ENCODE measurements at regions of chr14 and their contacts with region 1.

Region 1: GRCh38 chr14:49633640-49634546 is 1.2 kb downstream of the DNAAF2 start:
- DNase-seq: peak; percentile 97
- ATAC-seq: peak; percentile 80
- H3K4me3 ChIP-seq: peak overlapping the region; percentile 80 to 98 (median 91)
- H3K4me3 Mint-ChIP-seq: peak overlapping the region; percentile 96
- H3K27ac ChIP-seq: peak overlapping the region; percentile 97 to 98
- H3K27ac Mint-ChIP-seq: peak overlapping the region; percentile 97
- H3K4me1 ChIP-seq: peaks cover 20 to 26% of the 10 kb centered on the region in 2 donors
- H3K4me1 Mint-ChIP-seq: peaks cover 47% of the 10 kb centered on the region
- H3K27me3 ChIP-seq: no peaks in the 10 kb centered on the region
- H3K27me3 Mint-ChIP-seq: no peaks in the 10 kb centered on the region
- CTCF ChIP-seq: peak; percentile 85

Region 2: DNA sequence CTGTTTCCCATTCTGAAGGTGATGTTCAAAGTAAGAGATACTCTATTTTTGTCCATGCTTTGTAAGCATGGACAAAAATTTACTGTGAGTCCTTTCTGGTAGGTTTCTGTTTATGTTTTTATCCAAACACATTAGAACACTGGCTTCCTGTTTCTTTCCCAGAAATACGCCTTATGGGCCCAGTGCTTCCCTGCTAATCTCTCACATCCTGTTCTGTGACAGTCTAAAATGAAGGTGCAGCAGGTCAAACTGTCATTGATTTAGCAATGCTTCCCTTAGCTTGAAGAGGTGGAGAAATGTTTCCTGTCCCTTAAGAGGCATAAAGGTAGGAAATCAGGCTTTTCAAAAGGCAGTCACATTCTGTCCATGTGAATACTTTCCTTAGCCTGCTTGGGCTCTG is 353.3 kb before region 1 on chr14:
- CTCF ChIA-PET with region 1: no interaction called
- POLR2A ChIA-PET with region 1: no interaction called
- intact Hi-C with region 1: no loop called
- DNase-seq: no peak
- ATAC-seq: no peak
- H3K4me3 ChIP-seq: no peak overlapping the region
- H3K4me3 Mint-ChIP-seq: no peak overlapping the region
- H3K27ac ChIP-seq: no peak overlapping the region
- H3K27ac Mint-ChIP-seq: no peak overlapping the region
- H3K4me1 ChIP-seq: no peaks in the 10 kb centered on the region
- H3K4me1 Mint-ChIP-seq: no peaks in the 10 kb centered on the region
- H3K27me3 ChIP-seq: no peaks in the 10 kb centered on the region
- H3K27me3 Mint-ChIP-seq: peaks cover 5% of the 10 kb centered on the region
- CTCF ChIP-seq: no peak

Region 3: DNA sequence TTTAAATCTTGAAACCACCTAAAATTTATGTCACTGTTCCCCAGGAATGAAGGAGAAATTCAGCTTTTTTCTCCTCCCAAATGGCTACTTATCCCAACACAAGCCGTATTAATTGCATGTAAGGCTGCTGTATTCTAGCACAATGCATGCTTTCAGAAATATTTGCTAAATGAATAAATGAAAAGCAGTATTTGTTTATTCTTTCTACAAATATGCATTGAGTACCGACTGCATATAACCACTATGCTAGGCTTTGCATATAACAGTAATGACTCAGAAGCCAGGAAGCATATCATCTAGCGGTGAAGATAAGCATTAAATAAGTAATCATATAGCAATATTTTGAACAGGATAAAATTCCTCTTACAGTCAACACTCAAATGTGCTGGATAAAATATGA is 40.9 kb before region 1 on chr14:
- CTCF ChIA-PET with region 1: interaction called, 14 read pairs
- POLR2A ChIA-PET with region 1: interaction called, 18 read pairs
- intact Hi-C with region 1: loop called (anchors 1 kb)
- DNase-seq: no peak
- ATAC-seq: no peak
- H3K4me3 ChIP-seq: no peak overlapping the region
- H3K4me3 Mint-ChIP-seq: peak overlapping the region; percentile 2
- H3K27ac ChIP-seq: no peak overlapping the region
- H3K27ac Mint-ChIP-seq: peak overlapping the region; percentile 46
- H3K4me1 ChIP-seq: peaks cover 32 to 40% of the 10 kb centered on the region in 2 donors
- H3K4me1 Mint-ChIP-seq: peaks cover 43% of the 10 kb centered on the region
- H3K27me3 ChIP-seq: no peaks in the 10 kb centered on the region
- H3K27me3 Mint-ChIP-seq: no peaks in the 10 kb centered on the region
- CTCF ChIP-seq: no peak

Region 4: DNA sequence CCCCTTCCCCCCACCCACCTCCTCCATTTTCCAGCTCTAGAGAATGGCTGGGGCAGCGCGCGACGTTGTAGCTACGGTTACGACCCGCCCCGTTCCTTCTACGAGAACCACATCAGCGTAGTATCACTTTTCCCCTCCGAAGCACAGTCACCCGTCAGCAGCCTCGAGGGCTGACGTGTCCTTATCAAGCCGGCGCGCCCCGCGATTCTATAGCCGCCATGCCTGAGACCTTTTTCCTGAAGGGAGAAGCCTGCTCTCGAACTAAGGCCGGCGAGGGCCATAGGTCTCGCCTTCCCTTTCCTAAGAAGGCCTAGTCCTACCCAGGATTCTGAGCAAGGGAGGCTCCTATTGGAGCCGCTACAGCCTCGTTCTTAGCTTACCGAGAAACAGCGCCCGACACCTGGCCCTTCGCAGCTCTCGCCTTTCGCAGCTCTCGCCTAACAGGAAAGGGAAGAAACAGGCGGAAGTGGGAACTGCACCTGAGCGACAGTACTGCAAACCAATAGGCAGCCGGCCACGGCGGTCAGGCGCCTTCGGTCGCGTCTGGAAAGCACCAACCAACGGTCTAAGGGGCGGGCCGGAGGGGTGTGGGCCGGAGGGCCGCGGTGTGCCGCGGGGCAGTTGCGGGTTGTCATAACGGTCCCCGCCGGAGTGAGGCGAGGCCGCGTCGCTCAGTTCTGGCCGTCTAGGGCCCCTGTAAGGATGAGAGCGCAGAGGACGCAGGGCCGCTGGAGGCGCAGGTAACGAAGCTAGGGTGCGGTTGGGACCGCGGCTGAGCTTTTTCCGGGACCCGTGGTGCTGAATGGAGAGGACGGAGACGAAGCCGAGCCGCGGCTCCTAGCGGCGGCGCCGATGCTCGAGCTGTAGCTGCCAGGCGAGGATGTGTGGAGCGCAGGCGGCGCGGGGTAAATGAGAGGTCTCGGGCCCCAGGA is 13.4 kb before region 1 on chr14 and contains the starts of genes MGAT2 and RPL36AL:
- CTCF ChIA-PET with region 1: interaction called, 93 read pairs
- POLR2A ChIA-PET with region 1: interaction called, 88 read pairs
- intact Hi-C with region 1: loop called (anchors 1 kb)
- DNase-seq: peak; percentile 98
- ATAC-seq: peak; percentile 93
- H3K4me3 ChIP-seq: peak within 1 kb of the TSS; percentile 90 to 99 (median 97)
- H3K4me3 Mint-ChIP-seq: peak within 1 kb of the TSS; percentile 99
- H3K27ac ChIP-seq: peak within 1 kb of the TSS; percentile 96 to 98
- H3K27ac Mint-ChIP-seq: peak within 1 kb of the TSS; percentile 99
- H3K4me1 ChIP-seq: peaks cover 31 to 44% of the 10 kb centered on the region in 2 donors
- H3K4me1 Mint-ChIP-seq: peaks cover 55% of the 10 kb centered on the region
- H3K27me3 ChIP-seq: no peaks in the 10 kb centered on the region
- H3K27me3 Mint-ChIP-seq: no peaks in the 10 kb centered on the region
- CTCF ChIP-seq: peak; percentile 43
- total RNA-seq, gene MGAT2: 36.2 and 39.9 TPM in 2 replicates
- total RNA-seq, gene RPL36AL: 151 and 171 TPM in 2 replicates

Region 5: GRCh38 chr14:49767562-49768300 is 133.8 kb after region 1 on chr14 and contains the start of gene KLHDC2:
- CTCF ChIA-PET with region 1: interaction called, 35 read pairs
- POLR2A ChIA-PET with region 1: interaction called, 35 read pairs
- intact Hi-C with region 1: loop called (anchors 1 kb)
- DNase-seq: peak; percentile 93
- ATAC-seq: peak; percentile 86
- H3K4me3 ChIP-seq: peak within 1 kb of the TSS; percentile 74 to 97 (median 76)
- H3K4me3 Mint-ChIP-seq: peak within 1 kb of the TSS; percentile 98
- H3K27ac ChIP-seq: peak within 1 kb of the TSS; percentile 91 to 97
- H3K27ac Mint-ChIP-seq: peak within 1 kb of the TSS; percentile 99
- H3K4me1 ChIP-seq: peaks cover 22 to 29% of the 10 kb centered on the region in 2 donors
- H3K4me1 Mint-ChIP-seq: peaks cover 31% of the 10 kb centered on the region
- H3K27me3 ChIP-seq: no peaks in the 10 kb centered on the region
- H3K27me3 Mint-ChIP-seq: no peaks in the 10 kb centered on the region
- CTCF ChIP-seq: peak; percentile 40
- total RNA-seq, gene KLHDC2: 60.5 and 65.3 TPM in 2 replicates

Region 6: DNA sequence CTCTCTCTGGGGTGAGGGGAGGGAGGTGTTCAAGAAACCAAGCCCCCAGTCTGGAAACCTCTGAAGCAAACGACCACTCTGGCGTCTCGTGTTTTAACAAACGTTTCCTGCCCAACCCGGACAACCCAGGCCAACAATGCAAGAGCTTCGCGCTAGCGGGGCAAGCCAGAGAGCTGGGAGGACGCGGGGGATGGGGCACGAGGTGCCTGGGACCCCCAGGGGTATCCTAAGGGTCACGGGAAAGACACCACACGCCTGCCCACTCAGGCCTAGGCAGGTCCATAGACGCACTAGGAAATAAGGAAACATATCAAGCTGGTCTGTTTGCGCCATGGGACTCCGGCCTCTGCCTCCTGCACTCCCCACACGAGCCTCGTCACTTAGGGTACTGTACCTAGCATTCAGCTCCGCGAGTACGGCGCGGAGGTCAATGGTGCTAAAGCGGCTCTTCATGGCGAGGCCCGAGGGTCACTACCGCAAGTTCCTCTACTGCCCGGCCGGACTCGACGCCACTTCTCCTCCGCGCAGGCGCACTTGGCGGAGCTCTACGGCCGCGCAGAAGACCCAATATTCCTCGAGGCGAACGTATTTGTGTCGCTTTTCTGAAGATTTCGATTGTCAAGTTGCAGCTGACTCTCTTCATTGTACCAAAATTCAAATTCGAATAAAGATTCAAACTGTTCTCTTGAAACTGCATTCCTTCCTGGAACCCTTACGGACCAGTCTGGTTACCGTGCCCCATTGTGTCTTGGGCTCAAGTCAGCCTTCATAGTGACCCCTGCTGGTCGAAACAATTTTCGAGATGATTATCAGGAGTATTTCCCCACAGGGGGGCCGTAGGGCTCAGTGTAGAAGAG is 218.6 kb after region 1 on chr14 and contains the start of gene NEMF:
- CTCF ChIA-PET with region 1: interaction called, 13 read pairs
- POLR2A ChIA-PET with region 1: interaction called, 3 read pairs
- intact Hi-C with region 1: loop called (anchors 2 kb)
- DNase-seq: peak; percentile 94
- ATAC-seq: peak; percentile 84
- H3K4me3 ChIP-seq: peak within 1 kb of the TSS; percentile 78 to 99 (median 99)
- H3K4me3 Mint-ChIP-seq: peak within 1 kb of the TSS; percentile 98
- H3K27ac ChIP-seq: peak within 1 kb of the TSS; percentile 72 to 88
- H3K27ac Mint-ChIP-seq: peak within 1 kb of the TSS; percentile 98
- H3K4me1 ChIP-seq: peaks cover 20 to 31% of the 10 kb centered on the region in 2 donors
- H3K4me1 Mint-ChIP-seq: peaks cover 44% of the 10 kb centered on the region
- H3K27me3 ChIP-seq: no peaks in the 10 kb centered on the region
- H3K27me3 Mint-ChIP-seq: no peaks in the 10 kb centered on the region
- CTCF ChIP-seq: peak; percentile 86
- total RNA-seq, gene NEMF: 127 and 146 TPM in 2 replicates

Region 7: GRCh38 chr14:50231475-50232275 is 597.8 kb after region 1 on chr14 and contains the start of gene SOS2:
- CTCF ChIA-PET with region 1: interaction called, 4 read pairs
- POLR2A ChIA-PET with region 1: no interaction called
- intact Hi-C with region 1: loop called (anchors 1 kb)
- DNase-seq: peak; percentile 93
- ATAC-seq: peak; percentile 88
- H3K4me3 ChIP-seq: peak within 1 kb of the TSS; percentile 76 to 94 (median 87)
- H3K4me3 Mint-ChIP-seq: peak within 1 kb of the TSS; percentile 95
- H3K27ac ChIP-seq: peak within 1 kb of the TSS; percentile 83 to 88
- H3K27ac Mint-ChIP-seq: peak within 1 kb of the TSS; percentile 97
- H3K4me1 ChIP-seq: peaks cover 14 to 17% of the 10 kb centered on the region in 2 donors
- H3K4me1 Mint-ChIP-seq: peaks cover 30% of the 10 kb centered on the region
- H3K27me3 ChIP-seq: no peaks in the 10 kb centered on the region
- H3K27me3 Mint-ChIP-seq: no peaks in the 10 kb centered on the region
- CTCF ChIP-seq: no peak
- total RNA-seq, gene SOS2: 51.0 and 55.3 TPM in 2 replicates

Region 8: GRCh38 chr14:50830932-50831725 is 1197.2 kb after region 1 on chr14 and contains the start of gene NIN:
- CTCF ChIA-PET with region 1: no interaction called
- POLR2A ChIA-PET with region 1: no interaction called
- intact Hi-C with region 1: loop called (anchors 1 kb)
- DNase-seq: peak; percentile 88
- ATAC-seq: peak; percentile 83
- H3K4me3 ChIP-seq: peak within 1 kb of the TSS; percentile 70 to 90 (median 71)
- H3K4me3 Mint-ChIP-seq: peak within 1 kb of the TSS; percentile 99
- H3K27ac ChIP-seq: peak within 1 kb of the TSS; percentile 93 to 95
- H3K27ac Mint-ChIP-seq: peak within 1 kb of the TSS; percentile 99
- H3K4me1 ChIP-seq: peaks cover 49 to 60% of the 10 kb centered on the region in 2 donors
- H3K4me1 Mint-ChIP-seq: peaks cover 66% of the 10 kb centered on the region
- H3K27me3 ChIP-seq: no peaks in the 10 kb centered on the region
- H3K27me3 Mint-ChIP-seq: no peaks in the 10 kb centered on the region
- CTCF ChIP-seq: no peak
- total RNA-seq, gene NIN: 211 and 219 TPM in 2 replicates

Measured in B cell (primary cell).